ENCODE measurements at regions of chr14 and their contacts with region 1.

Region 1: GRCh38 chr14:105086833-105087307 is 21.6 kb upstream of the GPR132 start:
- DNase-seq: peak; percentile 87
- ATAC-seq: peak; percentile 73
- H3K4me3 Mint-ChIP-seq: peak overlapping the region; percentile 63
- H3K27ac Mint-ChIP-seq: no peak overlapping the region
- H3K4me1 Mint-ChIP-seq: peaks cover 9% of the 10 kb centered on the region; the same call in 1 of the 2 replicates
- H3K27me3 Mint-ChIP-seq: peaks cover 57% of the 10 kb centered on the region
- CTCF ChIP-seq: peak; percentile 34; the same call in 1 of the 2 replicates

Region 2: DNA sequence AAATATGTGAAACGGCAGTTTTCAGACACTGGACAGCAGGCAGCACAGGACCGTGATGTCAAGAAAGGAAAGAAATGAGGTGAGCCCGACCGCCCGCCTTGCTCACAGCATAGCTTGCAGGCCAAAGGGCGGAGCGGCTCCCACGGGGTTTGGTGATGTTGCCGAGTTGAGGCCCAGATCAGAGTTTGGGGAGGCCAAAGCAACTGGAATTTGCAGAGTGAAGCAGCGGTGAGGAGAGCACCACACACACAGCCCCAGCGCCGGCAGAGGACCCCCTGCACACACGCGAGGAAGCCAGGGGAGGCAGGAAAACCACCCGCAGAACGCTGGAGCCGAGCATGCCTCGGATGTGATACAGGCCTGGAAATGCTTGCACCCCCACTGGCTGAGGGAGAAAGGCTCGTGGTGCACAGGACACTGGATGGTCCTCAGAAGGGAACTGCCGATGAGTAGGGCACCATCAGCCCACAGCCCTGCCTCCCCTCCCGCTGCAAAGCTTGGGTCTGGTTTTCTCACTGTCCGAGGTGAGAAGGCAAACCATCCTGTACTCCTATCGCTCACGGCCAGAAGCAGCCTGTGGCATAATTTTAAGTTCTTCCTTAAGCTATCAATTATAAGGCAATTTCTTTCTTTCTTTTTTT is 187.9 kb before region 1 on chr14:
- CTCF ChIA-PET with region 1: no interaction called
- POLR2A ChIA-PET with region 1: no interaction called
- DNase-seq: no peak
- ATAC-seq: no peak
- H3K4me3 Mint-ChIP-seq: no peak overlapping the region
- H3K27ac Mint-ChIP-seq: no peak overlapping the region
- H3K4me1 Mint-ChIP-seq: no peaks in the 10 kb centered on the region
- H3K27me3 Mint-ChIP-seq: peaks cover 3% of the 10 kb centered on the region
- CTCF ChIP-seq: no peak

Region 3: GRCh38 chr14:104931304-104932240 is 155.3 kb before region 1 on chr14:
- CTCF ChIA-PET with region 1: no interaction called
- POLR2A ChIA-PET with region 1: no interaction called
- DNase-seq: peak; percentile 31
- ATAC-seq: no peak
- H3K4me3 Mint-ChIP-seq: peak overlapping the region; percentile 55
- H3K27ac Mint-ChIP-seq: no peak overlapping the region
- H3K4me1 Mint-ChIP-seq: no peaks in the 10 kb centered on the region
- H3K27me3 Mint-ChIP-seq: peaks cover 61% of the 10 kb centered on the region
- CTCF ChIP-seq: no peak

Region 4: DNA sequence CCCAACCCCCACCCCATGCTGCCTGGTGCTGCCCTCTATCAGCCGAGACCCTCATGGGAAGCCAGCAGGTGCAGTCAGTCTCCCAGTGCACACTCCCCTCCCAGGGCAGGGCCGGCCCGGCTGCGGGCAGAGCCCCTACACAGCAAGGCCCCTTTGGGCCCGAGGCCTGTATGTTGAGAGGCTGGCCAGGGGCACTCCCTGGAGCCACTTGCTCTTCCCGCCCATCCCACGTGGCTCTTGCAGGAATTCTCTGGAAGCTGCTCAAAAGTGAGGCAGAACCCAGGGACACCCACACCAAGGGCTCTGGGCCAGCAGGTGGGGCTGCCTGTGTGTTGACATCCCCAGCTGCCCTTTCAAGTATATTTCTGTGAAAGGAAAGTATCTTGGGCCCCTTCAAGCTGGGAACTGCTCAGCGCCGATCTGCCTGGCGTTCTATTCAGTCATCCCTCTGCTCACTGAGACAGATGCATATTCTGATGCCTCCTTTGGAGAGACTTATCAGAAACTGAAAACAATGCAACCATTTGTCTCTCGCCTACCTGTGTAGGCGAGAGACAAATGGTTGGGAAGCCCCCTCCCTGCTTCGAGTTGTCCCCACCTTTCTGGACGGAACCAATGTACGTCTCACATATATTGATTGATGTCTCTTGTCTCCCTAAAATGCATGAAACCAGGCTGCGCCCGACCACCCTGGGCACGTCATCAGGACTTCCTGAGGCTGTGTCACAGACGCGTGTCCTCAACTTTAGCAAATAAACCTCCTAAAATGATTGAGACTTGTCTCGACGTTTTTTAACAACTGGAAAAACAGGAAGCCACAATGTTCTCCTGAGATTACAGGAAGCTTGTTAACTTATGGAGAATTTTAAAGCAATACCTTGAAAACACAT is 27.6 kb before region 1 on chr14:
- CTCF ChIA-PET with region 1: interaction called, 14 read pairs
- POLR2A ChIA-PET with region 1: no interaction called
- DNase-seq: peak; percentile 46
- ATAC-seq: peak; percentile 76
- H3K4me3 Mint-ChIP-seq: no peak overlapping the region
- H3K27ac Mint-ChIP-seq: no peak overlapping the region
- H3K4me1 Mint-ChIP-seq: peaks cover 15% of the 10 kb centered on the region; the same call in 1 of the 2 replicates
- H3K27me3 Mint-ChIP-seq: peaks cover 28% of the 10 kb centered on the region
- CTCF ChIP-seq: no peak

Region 5: GRCh38 chr14:105075379-105076295 is 11.2 kb before region 1 on chr14:
- CTCF ChIA-PET with region 1: interaction called, 28 read pairs
- POLR2A ChIA-PET with region 1: no interaction called
- DNase-seq: no peak
- ATAC-seq: peak; percentile 68
- H3K4me3 Mint-ChIP-seq: no peak overlapping the region
- H3K27ac Mint-ChIP-seq: no peak overlapping the region
- H3K4me1 Mint-ChIP-seq: 0 out of 2 replicates have a peak, but pooled peaks cover 3% of the 10 kb centered on the region
- H3K27me3 Mint-ChIP-seq: peaks cover 5% of the 10 kb centered on the region
- CTCF ChIP-seq: no peak

Region 6: DNA sequence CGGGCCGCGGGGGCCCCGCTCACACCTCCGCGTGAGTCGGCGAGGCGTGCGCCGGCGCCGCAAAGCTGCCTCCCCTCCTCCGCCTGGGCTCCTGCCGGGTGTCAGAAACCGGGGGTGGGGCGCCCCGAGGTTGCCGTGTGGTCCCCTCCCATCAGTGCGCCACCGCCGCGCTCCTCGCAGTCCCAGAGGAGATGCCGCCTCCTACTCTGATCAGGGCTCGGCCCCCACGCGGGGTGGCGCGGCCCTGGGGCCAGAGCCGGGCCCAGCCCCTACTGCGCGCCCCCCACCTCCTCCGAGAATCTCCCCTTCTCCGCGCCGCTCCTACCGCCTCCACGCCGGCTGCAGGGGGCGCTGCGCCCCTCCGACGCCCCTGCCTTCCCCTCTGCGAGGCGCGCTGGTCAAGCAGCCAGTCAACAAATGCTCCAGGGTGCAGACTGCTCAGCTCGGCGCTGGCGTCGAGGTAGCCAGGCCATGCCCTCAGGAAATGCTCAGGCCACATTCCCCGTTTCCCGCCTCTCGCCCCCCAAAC is 82.2 kb after region 1 on chr14:
- CTCF ChIA-PET with region 1: interaction called, 36 read pairs
- POLR2A ChIA-PET with region 1: no interaction called
- DNase-seq: peak; percentile 76
- ATAC-seq: peak; percentile 68
- H3K4me3 Mint-ChIP-seq: peak overlapping the region; percentile 63
- H3K27ac Mint-ChIP-seq: no peak overlapping the region
- H3K4me1 Mint-ChIP-seq: no peaks in the 10 kb centered on the region
- H3K27me3 Mint-ChIP-seq: peaks cover 15% of the 10 kb centered on the region
- CTCF ChIP-seq: peak; percentile 73

Region 7: GRCh38 chr14:105187935-105188524 is 101.2 kb after region 1 on chr14:
- CTCF ChIA-PET with region 1: interaction called, 28 read pairs
- POLR2A ChIA-PET with region 1: interaction called, 4 read pairs
- DNase-seq: peak; percentile 52
- ATAC-seq: 0 out of 2 replicates have a peak, but pooled peaks have one; percentile 34
- H3K4me3 Mint-ChIP-seq: no peak overlapping the region
- H3K27ac Mint-ChIP-seq: no peak overlapping the region
- H3K4me1 Mint-ChIP-seq: peaks cover 12% of the 10 kb centered on the region
- H3K27me3 Mint-ChIP-seq: peaks cover 17% of the 10 kb centered on the region
- CTCF ChIP-seq: no peak

Region 8: GRCh38 chr14:105223260-105223659 is 136.4 kb after region 1 on chr14:
- CTCF ChIA-PET with region 1: no interaction called
- POLR2A ChIA-PET with region 1: no interaction called
- DNase-seq: no peak
- ATAC-seq: no peak
- H3K4me3 Mint-ChIP-seq: no peak overlapping the region
- H3K27ac Mint-ChIP-seq: no peak overlapping the region; the same call in 1 of the 2 replicates
- H3K4me1 Mint-ChIP-seq: no peaks in the 10 kb centered on the region
- H3K27me3 Mint-ChIP-seq: no peaks in the 10 kb centered on the region
- CTCF ChIP-seq: no peak